Prostate gland (tissue), 2 donors: ENCODE measurements at regions of chr3 and their contacts with region 1.

Region 1: GRCh38 chr3:12934431-12934830 is 93.1 kb upstream of the RPL32 start:
- DNase-seq: peak; percentile 33
- H3K4me3 ChIP-seq: no peak overlapping the region
- H3K27ac ChIP-seq: peak overlapping the region in 1 of 2 donors; percentile 36
- H3K4me1 ChIP-seq: peaks cover 2% of the 10 kb centered on the region
- H3K27me3 ChIP-seq: no peaks in the 10 kb centered on the region
- CTCF ChIP-seq: no peak
- POLR2A ChIP-seq: no peak

Region 2: DNA sequence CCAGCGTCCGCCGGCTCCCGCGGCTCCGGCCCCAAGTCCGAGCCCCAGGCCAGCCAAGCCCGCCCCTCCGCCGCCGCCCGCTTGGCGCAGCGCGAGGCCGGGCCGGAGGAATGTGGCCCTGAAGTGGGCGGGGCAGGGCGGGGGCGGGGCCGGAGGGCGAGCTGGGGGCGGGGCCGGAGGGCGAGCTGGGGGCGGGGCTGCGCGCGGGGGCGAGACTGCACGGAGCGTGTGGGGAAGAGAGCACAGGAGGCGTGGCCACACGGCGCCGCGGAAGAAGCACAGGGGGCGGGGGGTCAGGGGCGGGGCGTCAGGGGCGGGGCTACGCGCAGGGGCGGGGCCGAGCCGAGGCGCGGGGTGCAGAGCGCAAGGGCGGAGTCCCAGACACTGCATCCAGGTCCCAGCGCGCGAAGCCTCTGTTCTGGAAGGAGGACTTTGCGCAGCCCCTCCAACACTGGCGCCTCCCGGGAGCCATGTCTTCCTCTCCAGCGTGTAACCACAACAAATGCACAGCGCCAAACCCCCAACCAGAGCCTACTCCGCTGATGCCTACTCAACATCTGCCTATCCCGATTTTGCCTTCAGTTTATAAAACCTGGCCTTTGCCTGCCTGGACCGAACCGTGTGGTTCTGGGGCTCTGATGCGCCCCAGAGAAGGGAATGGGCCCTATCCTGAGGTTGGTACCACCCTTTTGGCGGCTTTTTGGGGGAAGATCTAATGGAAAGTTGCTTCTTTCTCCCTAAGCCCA is 33.3 kb after region 1 on chr3:
- intact Hi-C with region 1: loop called (anchors 5 kb)
- DNase-seq: peak; percentile 92
- H3K4me3 ChIP-seq: peak overlapping the region; percentile 68 to 91
- H3K27ac ChIP-seq: peak overlapping the region; percentile 74 to 84
- H3K4me1 ChIP-seq: peaks cover 20% of the 10 kb centered on the region
- H3K27me3 ChIP-seq: no peaks in the 10 kb centered on the region
- CTCF ChIP-seq: no peak
- POLR2A ChIP-seq: peak; percentile 17

Region 3: DNA sequence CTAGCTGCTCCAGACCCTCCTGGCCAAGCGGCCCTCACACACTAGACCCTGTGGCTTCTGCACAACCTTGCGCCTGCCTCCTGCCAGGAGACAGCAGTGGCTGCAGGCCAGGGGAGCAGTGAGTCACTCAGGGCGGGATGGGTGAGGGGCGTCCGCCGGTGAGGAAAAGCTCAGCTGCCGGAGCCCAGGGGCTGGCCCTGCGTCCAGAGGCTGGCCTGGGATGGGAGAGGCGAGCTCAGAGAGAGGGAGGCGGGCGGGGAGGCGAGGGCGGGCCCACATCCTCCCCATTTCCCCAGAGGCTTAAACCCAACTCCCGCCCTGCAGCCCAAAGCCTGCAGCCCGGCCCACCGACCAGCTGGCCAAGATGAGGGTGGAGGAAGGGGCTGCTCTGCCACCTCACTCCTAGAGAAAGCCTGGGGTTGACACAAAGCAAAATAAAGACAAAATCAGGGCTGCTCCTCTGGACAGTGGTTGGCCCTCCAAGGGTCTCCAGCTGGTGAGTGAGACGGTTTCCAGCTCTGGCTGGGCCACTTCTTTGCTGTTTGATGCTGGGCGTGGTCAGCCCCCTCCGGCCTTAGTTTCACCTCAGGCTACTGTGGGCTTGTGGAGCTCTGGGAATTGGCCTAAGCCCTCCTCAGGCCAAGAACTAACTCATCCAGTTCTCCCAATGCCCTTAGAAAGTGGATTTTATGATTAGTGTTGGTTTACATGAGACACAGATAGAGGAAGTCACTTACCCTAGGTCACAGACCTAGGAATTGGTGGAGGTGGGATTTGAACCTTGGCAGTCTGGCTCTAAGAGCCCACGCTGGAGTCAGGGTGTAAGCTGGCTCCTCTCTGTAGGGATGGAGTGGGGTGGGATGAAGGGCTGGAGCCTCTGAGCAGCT is 88.2 kb after region 1 on chr3:
- intact Hi-C with region 1: no loop called
- DNase-seq: no peak
- H3K4me3 ChIP-seq: no peak overlapping the region
- H3K27ac ChIP-seq: no peak overlapping the region
- H3K4me1 ChIP-seq: no peaks in the 10 kb centered on the region
- H3K27me3 ChIP-seq: no peaks in the 10 kb centered on the region
- CTCF ChIP-seq: no peak
- POLR2A ChIP-seq: no peak